HCT116 (cell line): ENCODE measurements at regions of chr9 and their contacts with region 1.

Region 1: GRCh38 chr9:69346998-69347397 is 22.0 kb downstream of the ENTREP1 start:
- DNase-seq: no peak
- ATAC-seq: no peak
- H3K4me3 ChIP-seq: no peak overlapping the region
- H3K27ac ChIP-seq: no peak overlapping the region
- H3K4me1 ChIP-seq: no peaks in the 10 kb centered on the region
- H3K27me3 ChIP-seq: no peaks in the 10 kb centered on the region
- CTCF ChIP-seq: no peak
- POLR2A ChIP-seq: no peak
- RAD21 ChIP-seq: no peak

Region 2: GRCh38 chr9:69380811-69381210 is 33.8 kb after region 1 on chr9:
- CTCF ChIA-PET with region 1: no interaction called
- POLR2A ChIA-PET with region 1: no interaction called
- RAD21 ChIA-PET with region 1: no interaction called
- intact Hi-C with region 1: loop called (anchors 5 kb)
- DNase-seq: no peak
- ATAC-seq: no peak
- H3K4me3 ChIP-seq: no peak overlapping the region
- H3K27ac ChIP-seq: no peak overlapping the region
- H3K4me1 ChIP-seq: peaks cover 6 to 14% of the 10 kb centered on the region in 2 experiments; a peak in 2 of 4 replicates
- H3K27me3 ChIP-seq: no peaks in the 10 kb centered on the region
- CTCF ChIP-seq: no peak
- POLR2A ChIP-seq: no peak
- RAD21 ChIP-seq: no peak

Region 3: DNA sequence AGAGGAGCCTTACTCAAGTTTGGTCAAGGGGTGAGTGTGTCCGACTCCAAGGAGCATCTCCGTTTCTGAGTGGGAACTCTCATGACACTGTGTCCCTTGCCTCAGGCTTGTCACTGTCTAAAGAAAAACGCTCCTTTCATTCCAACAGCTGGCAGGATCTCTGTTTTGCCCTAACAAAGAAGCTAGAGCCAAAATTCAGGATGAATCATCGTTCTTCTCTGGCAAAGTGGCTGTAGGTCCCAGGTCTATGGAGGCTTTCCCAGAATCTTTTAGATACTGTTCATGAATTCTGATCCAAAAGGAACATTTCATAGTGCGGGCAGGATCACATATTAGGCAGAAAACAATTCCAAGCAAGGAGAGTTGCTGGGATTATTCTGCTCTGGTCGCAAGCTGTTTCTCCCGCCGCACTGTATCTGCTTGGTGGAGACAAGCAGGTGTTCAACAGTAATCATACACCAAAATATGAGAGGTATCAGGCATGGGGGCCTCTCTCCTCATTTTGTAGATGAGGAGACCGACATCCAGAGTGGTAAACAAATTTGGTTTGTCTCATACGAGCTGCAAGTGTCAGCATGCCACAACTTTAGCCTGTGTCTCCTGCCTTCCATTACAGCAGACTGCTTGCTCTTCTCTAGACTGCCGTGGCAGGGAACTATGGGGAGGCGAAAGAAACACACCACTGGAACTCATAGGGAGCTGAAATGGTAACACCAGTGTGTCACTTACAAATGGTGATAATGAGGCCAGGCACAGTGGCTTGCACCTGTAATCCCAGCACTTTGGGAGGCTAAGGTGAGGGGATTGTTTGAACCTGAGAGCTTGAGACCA is 50.6 kb after region 1 on chr9:
- CTCF ChIA-PET with region 1: no interaction called
- POLR2A ChIA-PET with region 1: no interaction called
- RAD21 ChIA-PET with region 1: no interaction called
- intact Hi-C with region 1: loop called (anchors 5 kb)
- DNase-seq: no peak
- ATAC-seq: no peak
- H3K4me3 ChIP-seq: no peak overlapping the region
- H3K27ac ChIP-seq: no peak overlapping the region
- H3K4me1 ChIP-seq: no peaks in the 10 kb centered on the region
- H3K27me3 ChIP-seq: no peaks in the 10 kb centered on the region
- CTCF ChIP-seq: no peak
- POLR2A ChIP-seq: no peak
- RAD21 ChIP-seq: no peak